AG04450 (cell line): ENCODE measurements at regions of chr1 and their contacts with region 1.

Region 1: DNA sequence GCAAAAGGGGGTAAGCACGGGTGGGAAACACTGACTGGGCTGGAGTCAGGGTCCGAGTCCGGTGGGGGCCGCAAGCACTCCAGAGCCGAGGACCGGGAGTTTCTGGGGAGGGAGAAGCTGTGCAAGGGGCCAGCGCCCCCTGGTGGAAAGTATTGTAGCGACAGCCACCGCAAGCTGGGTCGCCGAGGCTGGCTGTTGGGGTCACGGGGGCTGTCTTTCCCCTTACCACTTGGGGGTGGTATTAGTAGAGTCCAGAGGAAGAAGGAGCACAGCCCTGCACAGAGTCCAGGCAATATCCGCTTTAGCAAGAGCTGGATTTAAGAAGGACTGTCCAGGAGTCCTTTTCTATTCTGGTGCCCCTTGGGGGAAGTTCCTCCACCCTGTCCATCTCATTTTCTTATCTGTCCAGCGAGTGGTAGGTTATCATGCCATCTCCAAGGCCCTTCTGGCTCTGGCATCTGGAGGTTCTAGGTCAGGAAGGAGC is 17.9 kb upstream of the ETV3 start:
- DNase-seq: no peak
- H3K4me3 ChIP-seq: peak overlapping the region; percentile 25; the same call in 1 of the 2 replicates
- H3K27ac ChIP-seq: no peak overlapping the region
- H3K27me3 ChIP-seq: peaks cover 4% of the 10 kb centered on the region
- CTCF ChIP-seq: peak; percentile 91

Region 2: GRCh38 chr1:156717275-156717805 is 438.8 kb before region 1 on chr1:
- CTCF ChIA-PET with region 1: no interaction called
- POLR2A ChIA-PET with region 1: no interaction called
- DNase-seq: no peak
- H3K4me3 ChIP-seq: no peak overlapping the region
- H3K27ac ChIP-seq: no peak overlapping the region
- H3K27me3 ChIP-seq: no peaks in the 10 kb centered on the region
- CTCF ChIP-seq: no peak

Region 3: GRCh38 chr1:157073944-157074767 is 81.9 kb before region 1 on chr1:
- CTCF ChIA-PET with region 1: interaction called, 15 read pairs
- POLR2A ChIA-PET with region 1: no interaction called
- DNase-seq: peak; percentile 32
- H3K4me3 ChIP-seq: no peak overlapping the region
- H3K27ac ChIP-seq: no peak overlapping the region
- H3K27me3 ChIP-seq: peaks cover 15% of the 10 kb centered on the region
- CTCF ChIP-seq: peak; percentile 71

Region 4: DNA sequence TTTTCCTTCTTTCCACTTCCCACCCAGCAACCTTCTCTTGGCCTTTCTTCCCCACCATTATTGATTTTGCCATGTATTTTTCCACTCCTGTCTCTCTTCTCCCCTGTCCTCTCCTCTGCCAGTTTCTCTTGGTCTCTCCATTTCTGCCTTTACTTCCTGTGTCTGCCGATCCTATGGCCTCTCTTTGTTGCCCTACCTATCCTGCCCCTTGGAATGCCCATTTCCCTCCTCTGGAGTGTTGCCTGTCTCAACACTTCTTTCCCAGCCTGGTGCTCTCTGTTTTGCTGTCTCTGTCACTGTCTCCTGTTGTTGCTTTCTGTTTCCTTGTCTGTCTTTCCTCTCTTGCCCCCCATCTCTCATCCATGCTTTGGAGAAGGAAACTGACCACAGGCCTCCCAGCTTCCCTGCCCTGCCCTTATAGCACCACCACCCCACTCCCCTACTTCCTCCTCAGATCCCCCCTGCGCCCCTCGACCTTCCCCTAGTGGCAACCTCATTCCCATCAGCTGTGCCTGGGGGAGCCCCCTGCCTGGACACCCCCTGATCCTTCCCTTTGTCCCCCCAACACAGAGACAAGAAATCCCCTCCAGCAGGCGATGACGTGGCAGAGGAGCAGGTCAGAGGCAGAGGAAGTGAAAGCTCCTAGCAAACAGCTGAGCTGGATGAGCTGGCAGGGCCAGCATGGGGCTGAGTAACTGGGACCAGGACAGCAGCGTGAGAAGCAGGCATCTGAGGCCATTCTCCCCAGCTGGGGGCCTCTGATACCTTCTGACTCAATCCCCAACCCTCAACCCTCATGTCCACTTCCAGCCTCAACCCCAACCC is 49.9 kb before region 1 on chr1:
- CTCF ChIA-PET with region 1: interaction called, 18 read pairs
- POLR2A ChIA-PET with region 1: interaction called, 3 read pairs
- DNase-seq: peak; percentile 70
- H3K4me3 ChIP-seq: no peak overlapping the region
- H3K27ac ChIP-seq: peak overlapping the region; percentile 87
- H3K27me3 ChIP-seq: no peaks in the 10 kb centered on the region
- CTCF ChIP-seq: no peak

Region 5: GRCh38 chr1:157138220-157139051 is 17.7 kb before region 1 on chr1 and contains the start of gene ETV3:
- CTCF ChIA-PET with region 1: interaction called, 213 read pairs
- POLR2A ChIA-PET with region 1: interaction called, 20 read pairs
- DNase-seq: peak; percentile 73
- H3K4me3 ChIP-seq: peak within 1 kb of the TSS; percentile 99
- H3K27ac ChIP-seq: peak within 1 kb of the TSS; percentile 98
- H3K27me3 ChIP-seq: no peaks in the 10 kb centered on the region
- CTCF ChIP-seq: no peak
- polyA plus RNA-seq, gene ETV3: 9.2 and 10.0 TPM in 2 replicates

Region 6: GRCh38 chr1:157201767-157202166 is 45.7 kb after region 1 on chr1:
- CTCF ChIA-PET with region 1: no interaction called
- POLR2A ChIA-PET with region 1: no interaction called
- DNase-seq: no peak
- H3K4me3 ChIP-seq: no peak overlapping the region
- H3K27ac ChIP-seq: no peak overlapping the region
- H3K27me3 ChIP-seq: peaks cover 12% of the 10 kb centered on the region
- CTCF ChIP-seq: no peak

Region 7: DNA sequence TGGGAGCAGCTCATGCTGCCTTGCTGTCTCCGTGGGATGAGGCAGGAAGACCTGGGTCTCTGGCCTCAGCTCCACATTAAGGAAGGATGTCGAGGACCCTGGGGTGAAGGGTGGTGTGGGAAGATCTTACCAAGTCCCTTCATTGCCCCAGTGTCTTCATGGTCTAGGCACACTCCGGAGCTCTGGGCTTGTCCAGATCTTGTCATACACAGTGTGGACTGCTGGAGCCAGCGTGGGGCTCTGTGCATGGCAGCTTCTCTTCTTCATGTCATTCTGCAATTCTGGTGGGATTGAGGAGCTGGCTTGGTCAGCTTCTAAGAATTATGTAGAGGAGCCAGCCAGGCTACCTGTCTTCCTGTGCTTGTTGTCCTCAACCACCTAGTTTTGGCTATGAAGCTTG is 61.4 kb after region 1 on chr1:
- CTCF ChIA-PET with region 1: no interaction called
- POLR2A ChIA-PET with region 1: no interaction called
- DNase-seq: no peak
- H3K4me3 ChIP-seq: no peak overlapping the region
- H3K27ac ChIP-seq: no peak overlapping the region
- H3K27me3 ChIP-seq: peaks cover 3% of the 10 kb centered on the region
- CTCF ChIP-seq: no peak